ENCODE measurements at regions of chr5 and their contacts with region 1.

Region 1: GRCh38 chr5:127072861-127073846 is at the start of gene C5orf63:
- DNase-seq: peak; percentile 86
- H3K4me3 Mint-ChIP-seq: peak within 1 kb of the TSS; percentile 85
- H3K27ac Mint-ChIP-seq: peak within 1 kb of the TSS; percentile 79
- H3K4me1 Mint-ChIP-seq: peaks cover 10% of the 10 kb centered on the region
- H3K27me3 Mint-ChIP-seq: no peaks in the 10 kb centered on the region
- total RNA-seq, gene C5orf63: 9.4 to 9.7 TPM

Region 2: DNA sequence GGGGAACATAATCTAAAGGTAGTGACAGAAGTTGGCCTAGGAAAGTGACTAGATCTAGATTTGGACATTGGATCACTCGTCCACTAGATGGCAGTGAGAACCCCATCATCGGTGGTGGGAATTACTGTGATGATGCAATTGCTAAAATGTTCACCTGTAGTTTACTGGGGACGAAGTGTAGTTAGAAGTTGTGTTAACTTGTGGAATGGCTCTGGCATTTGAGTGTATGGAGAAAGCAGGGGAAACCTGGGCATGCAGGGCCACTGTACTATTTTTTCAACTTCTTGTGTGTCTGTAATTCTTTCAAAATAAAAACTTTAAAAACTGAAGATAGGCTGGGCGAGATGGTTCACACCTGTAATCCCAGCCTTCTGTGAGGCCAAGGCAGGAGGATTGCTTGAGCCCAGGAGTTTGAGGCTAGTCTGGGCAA is 396.9 kb before region 1 on chr5:
- CTCF ChIA-PET with region 1: interaction called, 4 read pairs
- POLR2A ChIA-PET with region 1: no interaction called
- intact Hi-C with region 1: loop called (anchors 5 kb)
- DNase-seq: peak; percentile 78
- H3K4me3 Mint-ChIP-seq: no peak overlapping the region
- H3K27ac Mint-ChIP-seq: peak overlapping the region; percentile 20
- H3K4me1 Mint-ChIP-seq: peaks cover 3% of the 10 kb centered on the region
- H3K27me3 Mint-ChIP-seq: no peaks in the 10 kb centered on the region

Region 3: GRCh38 chr5:126763371-126763770 is 309.8 kb before region 1 on chr5:
- CTCF ChIA-PET with region 1: no interaction called
- POLR2A ChIA-PET with region 1: interaction called, 3 read pairs
- intact Hi-C with region 1: loop called (anchors 5 kb)
- DNase-seq: peak; percentile 39
- H3K4me3 Mint-ChIP-seq: no peak overlapping the region
- H3K27ac Mint-ChIP-seq: peak overlapping the region; percentile 28
- H3K4me1 Mint-ChIP-seq: peaks cover 39% of the 10 kb centered on the region
- H3K27me3 Mint-ChIP-seq: no peaks in the 10 kb centered on the region

Region 4: GRCh38 chr5:126972062-126972895 is 100.9 kb before region 1 on chr5:
- CTCF ChIA-PET with region 1: no interaction called
- POLR2A ChIA-PET with region 1: no interaction called
- intact Hi-C with region 1: loop called (anchors 2 kb)
- DNase-seq: peak; percentile 26
- H3K4me3 Mint-ChIP-seq: peak overlapping the region; percentile 47
- H3K27ac Mint-ChIP-seq: peak overlapping the region; percentile 78
- H3K4me1 Mint-ChIP-seq: peaks cover 24% of the 10 kb centered on the region
- H3K27me3 Mint-ChIP-seq: no peaks in the 10 kb centered on the region

Region 5: GRCh38 chr5:127088251-127089010 is 15.3 kb after region 1 on chr5:
- CTCF ChIA-PET with region 1: no interaction called
- POLR2A ChIA-PET with region 1: no interaction called
- intact Hi-C with region 1: no loop called
- DNase-seq: no peak
- H3K4me3 Mint-ChIP-seq: no peak overlapping the region
- H3K27ac Mint-ChIP-seq: no peak overlapping the region
- H3K4me1 Mint-ChIP-seq: peaks cover 5% of the 10 kb centered on the region
- H3K27me3 Mint-ChIP-seq: no peaks in the 10 kb centered on the region

Region 6: DNA sequence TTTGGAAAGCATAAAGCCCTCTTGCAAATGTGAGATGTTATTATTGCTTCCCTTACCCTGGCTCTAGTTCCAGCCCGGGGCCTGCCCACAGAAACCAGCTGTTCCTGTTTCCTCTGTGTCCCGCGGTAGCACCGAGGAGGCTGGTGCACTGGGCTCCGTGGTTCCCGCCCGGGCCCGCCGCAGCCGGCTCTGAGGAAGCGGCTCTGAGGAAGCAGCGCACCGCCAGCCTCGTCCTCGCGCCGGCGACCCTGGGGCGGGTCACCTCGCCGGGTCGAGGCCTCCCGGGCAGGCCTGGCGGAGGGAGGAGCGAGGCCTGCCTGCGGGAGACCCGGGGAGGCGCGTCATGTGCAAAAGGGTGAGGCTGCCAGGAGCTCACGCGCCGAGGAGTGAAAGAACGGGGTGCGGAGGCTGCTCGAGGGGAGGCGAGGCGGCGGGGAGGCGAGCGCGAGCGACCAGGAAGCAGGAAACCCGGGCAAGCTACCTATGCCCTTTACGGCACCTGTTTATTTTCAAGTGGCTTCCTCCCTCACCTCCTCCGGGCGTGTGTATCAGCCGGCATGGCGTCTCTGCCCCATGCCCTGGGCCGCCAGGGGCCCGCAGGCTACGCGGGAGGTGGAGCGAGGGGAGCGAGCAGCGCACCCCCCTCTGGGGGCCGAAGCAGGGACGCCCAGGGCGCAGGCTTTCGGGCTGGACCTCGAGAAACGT is 156.2 kb after region 1 on chr5:
- CTCF ChIA-PET with region 1: no interaction called
- POLR2A ChIA-PET with region 1: no interaction called
- intact Hi-C with region 1: loop called (anchors 1 kb)
- DNase-seq: peak; percentile 61
- H3K4me3 Mint-ChIP-seq: peak overlapping the region; percentile 60
- H3K27ac Mint-ChIP-seq: no peak overlapping the region
- H3K4me1 Mint-ChIP-seq: peaks cover 21% of the 10 kb centered on the region
- H3K27me3 Mint-ChIP-seq: no peaks in the 10 kb centered on the region